Posterior vena cava (tissue), 2 donors: ENCODE measurements at regions of chr15 and their contacts with region 1.

Region 1: DNA sequence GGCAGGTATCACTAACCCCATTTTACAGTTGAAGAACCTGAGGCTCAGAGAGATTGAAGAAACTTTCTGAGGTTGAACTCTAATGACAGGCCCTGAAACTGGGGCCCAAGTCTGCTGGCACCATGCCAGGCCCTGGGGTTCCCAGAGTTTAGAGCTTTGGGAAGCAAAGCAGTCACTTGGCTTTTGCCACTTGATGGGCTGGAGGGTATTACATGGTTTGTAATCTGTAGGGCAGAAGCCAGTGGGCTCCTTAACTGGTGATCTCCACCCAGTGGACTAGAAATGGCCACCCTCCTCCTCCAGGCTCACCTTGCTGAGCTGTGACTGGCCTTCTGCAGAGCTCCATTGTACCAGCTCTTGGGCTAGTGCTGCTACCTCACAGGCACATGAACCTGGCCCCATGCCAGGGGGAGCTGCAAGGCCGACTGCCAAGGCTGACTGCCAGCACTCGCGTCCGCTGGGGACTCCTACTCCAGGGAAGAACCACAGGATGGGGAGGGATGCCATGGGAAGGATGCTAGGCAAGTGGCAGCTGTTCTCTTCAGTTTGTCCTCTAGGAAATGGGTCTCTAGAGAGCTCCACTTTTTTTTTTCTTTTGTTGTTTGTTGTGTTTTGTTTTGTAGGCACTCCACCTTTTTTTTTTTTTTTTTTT is 104.8 kb downstream of the ETFA start:
- DNase-seq: no peak

Region 2: DNA sequence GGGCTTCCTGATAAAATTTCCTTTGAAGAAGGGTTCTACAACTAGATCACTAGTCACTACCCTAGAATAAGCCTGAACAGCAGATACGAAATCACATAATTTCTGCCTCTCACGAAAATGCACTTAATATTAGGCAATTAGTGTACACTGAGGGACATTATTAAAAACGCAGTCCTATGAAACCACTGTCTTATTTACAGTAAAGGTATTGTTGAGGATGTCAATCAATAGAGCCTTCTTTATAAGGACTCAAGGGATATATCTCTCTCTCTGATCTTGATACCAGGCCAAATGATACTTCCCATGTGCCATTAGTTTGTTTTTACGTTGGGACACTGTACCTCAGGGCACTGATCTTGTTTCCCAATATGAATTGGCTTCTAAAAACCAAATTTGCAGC is 45.3 kb after region 1 on chr15:
- intact Hi-C with region 1: loop called in 1 of 2 experiments (anchors 1 kb)
- DNase-seq: no peak

Region 3: DNA sequence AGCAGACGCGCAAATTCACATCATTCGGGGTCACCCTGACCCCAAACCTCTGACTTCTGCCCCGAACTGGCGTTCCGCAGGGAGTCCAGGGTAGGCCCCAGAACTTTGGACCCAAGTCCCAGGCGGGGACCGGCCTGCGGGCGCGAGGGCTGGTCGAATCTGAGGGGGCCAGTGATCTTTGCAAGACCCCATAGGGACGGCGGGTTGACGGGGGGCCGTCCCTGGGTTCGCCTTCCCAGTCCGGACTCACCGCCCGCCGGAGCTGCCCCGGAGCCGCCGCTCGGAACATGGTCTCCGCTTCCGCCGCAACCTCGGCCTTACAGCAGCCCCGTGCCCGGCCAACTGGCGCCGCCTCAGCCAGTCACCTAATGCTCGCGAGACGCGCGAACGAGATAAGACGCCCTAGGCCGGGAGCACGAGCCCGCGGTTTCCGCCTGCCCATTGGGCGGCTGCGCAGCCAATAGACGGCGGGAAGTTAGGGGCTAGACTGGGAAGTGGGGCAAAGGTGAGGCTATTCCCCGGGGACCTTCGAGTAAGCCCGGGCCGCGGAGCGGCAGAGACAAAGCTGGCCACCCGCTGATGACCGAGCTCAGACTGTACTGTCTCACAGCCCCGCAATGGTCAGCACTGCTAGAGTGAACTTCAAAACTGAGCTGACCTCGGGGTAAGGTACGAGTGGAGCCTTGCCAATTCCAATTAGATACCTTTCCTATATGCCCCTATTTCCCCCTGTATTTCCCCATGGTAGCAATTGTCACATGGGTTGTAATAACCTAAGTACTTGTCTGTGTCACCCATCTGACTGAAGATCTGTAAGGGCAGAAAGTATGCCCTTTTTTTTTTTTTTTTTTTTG is 104.9 kb after region 1 on chr15 and contains the start of gene ETFA:
- intact Hi-C with region 1: loop called in 1 of 2 experiments (anchors 10 kb)
- DNase-seq: peak; percentile 99
- total RNA-seq, gene ETFA: 68.6 to 98.4 TPM